ENCODE measurements at regions of chr3 and their contacts with region 1.

Region 1: GRCh38 chr3:44624749-44625480 is at the start of gene ZNF197:
- DNase-seq: peak; percentile 81
- ATAC-seq: peak; percentile 93
- H3K4me3 Mint-ChIP-seq: peak within 1 kb of the TSS; percentile 87
- H3K27ac Mint-ChIP-seq: peak within 1 kb of the TSS; percentile 76
- H3K4me1 Mint-ChIP-seq: peaks cover 24% of the 10 kb centered on the region
- H3K27me3 Mint-ChIP-seq: no peaks in the 10 kb centered on the region
- total RNA-seq, gene ZNF197: 10.9 to 11.6 TPM

Region 2: GRCh38 chr3:44529927-44530326 is 95.0 kb before region 1 on chr3:
- CTCF ChIA-PET with region 1: interaction called, 4 read pairs
- POLR2A ChIA-PET with region 1: no interaction called
- intact Hi-C with region 1: loop called in 1 of 2 experiments (anchors 1 kb)
- DNase-seq: peak; percentile 53
- ATAC-seq: no peak
- H3K4me3 Mint-ChIP-seq: no peak overlapping the region
- H3K27ac Mint-ChIP-seq: no peak overlapping the region
- H3K4me1 Mint-ChIP-seq: no peaks in the 10 kb centered on the region
- H3K27me3 Mint-ChIP-seq: peaks cover 7% of the 10 kb centered on the region

Region 3: GRCh38 chr3:44554626-44555592 is 70.0 kb before region 1 on chr3 and contains the start of gene ZKSCAN7:
- CTCF ChIA-PET with region 1: no interaction called
- POLR2A ChIA-PET with region 1: no interaction called
- intact Hi-C with region 1: loop called in 1 of 2 experiments (anchors 2 kb)
- DNase-seq: peak; percentile 68
- ATAC-seq: peak; percentile 65
- H3K4me3 Mint-ChIP-seq: peak within 1 kb of the TSS; percentile 88
- H3K27ac Mint-ChIP-seq: peak within 1 kb of the TSS; percentile 88
- H3K4me1 Mint-ChIP-seq: peaks cover 13% of the 10 kb centered on the region
- H3K27me3 Mint-ChIP-seq: no peaks in the 10 kb centered on the region
- total RNA-seq, gene ZKSCAN7: 2.0 TPM

Region 4: DNA sequence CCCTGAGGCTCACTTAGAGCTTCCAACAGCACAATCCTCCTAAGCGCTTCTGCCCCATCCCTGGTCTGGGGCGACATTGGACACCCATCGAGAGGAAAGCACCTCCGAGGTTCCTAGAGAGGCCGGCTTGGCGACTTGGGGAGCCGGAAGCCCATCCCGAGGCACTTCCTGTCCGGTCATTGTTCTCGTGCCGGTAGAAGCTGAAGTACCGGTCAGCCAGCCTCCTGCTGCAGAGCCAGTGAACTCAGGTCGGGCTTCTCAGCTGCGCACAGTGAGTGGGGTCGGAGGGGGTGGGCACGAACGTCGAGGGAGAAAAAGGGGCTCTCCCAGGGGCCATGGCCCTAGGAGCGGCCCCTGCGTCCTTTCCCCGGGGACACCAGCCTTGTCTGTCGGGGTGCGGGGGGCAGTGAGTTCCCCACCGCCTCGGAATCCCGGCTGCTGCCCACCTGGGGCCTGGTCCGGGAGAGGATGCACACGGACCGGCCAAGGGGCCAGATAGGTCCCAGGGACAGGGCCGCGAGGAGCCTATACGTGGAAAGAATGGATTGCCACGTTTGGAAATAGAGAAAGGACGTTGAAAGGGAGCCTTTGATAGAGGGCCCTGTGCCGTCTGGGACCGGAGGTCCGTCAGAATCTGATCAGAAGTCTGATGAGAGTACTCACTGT is 23.8 kb after region 1 on chr3 and contains the start of gene ZNF35:
- CTCF ChIA-PET with region 1: interaction called, 4 read pairs
- POLR2A ChIA-PET with region 1: no interaction called
- intact Hi-C with region 1: loop called (anchors 1 to 2 kb)
- DNase-seq: peak; percentile 67
- ATAC-seq: peak; percentile 85
- H3K4me3 Mint-ChIP-seq: peak within 1 kb of the TSS; percentile 76
- H3K27ac Mint-ChIP-seq: no peak within 1 kb of the TSS
- H3K4me1 Mint-ChIP-seq: peaks cover 8% of the 10 kb centered on the region
- H3K27me3 Mint-ChIP-seq: no peaks in the 10 kb centered on the region
- total RNA-seq, gene ZNF35: 2.0 to 2.7 TPM

Region 5: DNA sequence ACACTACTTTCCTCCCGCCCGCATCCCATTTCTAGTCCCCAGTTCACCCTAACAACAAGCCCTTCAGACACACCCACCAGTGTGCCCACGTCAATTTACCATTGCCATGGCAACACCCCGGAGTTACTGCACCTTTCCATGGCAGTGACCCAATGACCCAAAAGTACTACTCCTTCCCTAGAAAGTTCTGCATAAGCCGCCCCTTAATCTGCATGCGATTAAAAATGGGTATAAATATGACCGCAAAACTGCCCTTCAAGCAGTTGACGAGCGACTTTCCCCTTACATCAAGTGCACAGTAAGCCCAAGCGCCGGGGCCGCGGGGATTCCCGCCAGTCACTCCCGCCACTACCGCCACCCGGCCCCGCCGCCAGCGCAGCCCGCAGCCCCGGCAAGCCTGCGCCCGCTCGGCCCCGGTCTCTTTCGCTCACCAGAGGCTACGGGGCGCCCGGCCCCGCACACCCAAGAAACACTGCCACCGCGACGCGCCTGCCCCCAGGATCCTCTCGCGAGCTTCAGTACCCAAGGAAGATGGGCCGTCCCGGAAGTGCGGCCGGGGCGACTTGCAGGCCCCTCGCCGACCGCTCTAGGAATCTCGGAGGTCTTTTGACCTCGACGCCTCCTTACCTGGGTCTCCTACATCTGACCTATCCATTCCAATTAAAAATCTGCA is 60.3 kb after region 1 on chr3:
- CTCF ChIA-PET with region 1: no interaction called
- POLR2A ChIA-PET with region 1: no interaction called
- intact Hi-C with region 1: loop called (anchors 1 to 2 kb)
- DNase-seq: peak; percentile 77
- ATAC-seq: peak; percentile 92
- H3K4me3 Mint-ChIP-seq: peak overlapping the region; percentile 73
- H3K27ac Mint-ChIP-seq: peak overlapping the region; percentile 29
- H3K4me1 Mint-ChIP-seq: peaks cover 11% of the 10 kb centered on the region
- H3K27me3 Mint-ChIP-seq: peaks cover 23% of the 10 kb centered on the region

Region 6: DNA sequence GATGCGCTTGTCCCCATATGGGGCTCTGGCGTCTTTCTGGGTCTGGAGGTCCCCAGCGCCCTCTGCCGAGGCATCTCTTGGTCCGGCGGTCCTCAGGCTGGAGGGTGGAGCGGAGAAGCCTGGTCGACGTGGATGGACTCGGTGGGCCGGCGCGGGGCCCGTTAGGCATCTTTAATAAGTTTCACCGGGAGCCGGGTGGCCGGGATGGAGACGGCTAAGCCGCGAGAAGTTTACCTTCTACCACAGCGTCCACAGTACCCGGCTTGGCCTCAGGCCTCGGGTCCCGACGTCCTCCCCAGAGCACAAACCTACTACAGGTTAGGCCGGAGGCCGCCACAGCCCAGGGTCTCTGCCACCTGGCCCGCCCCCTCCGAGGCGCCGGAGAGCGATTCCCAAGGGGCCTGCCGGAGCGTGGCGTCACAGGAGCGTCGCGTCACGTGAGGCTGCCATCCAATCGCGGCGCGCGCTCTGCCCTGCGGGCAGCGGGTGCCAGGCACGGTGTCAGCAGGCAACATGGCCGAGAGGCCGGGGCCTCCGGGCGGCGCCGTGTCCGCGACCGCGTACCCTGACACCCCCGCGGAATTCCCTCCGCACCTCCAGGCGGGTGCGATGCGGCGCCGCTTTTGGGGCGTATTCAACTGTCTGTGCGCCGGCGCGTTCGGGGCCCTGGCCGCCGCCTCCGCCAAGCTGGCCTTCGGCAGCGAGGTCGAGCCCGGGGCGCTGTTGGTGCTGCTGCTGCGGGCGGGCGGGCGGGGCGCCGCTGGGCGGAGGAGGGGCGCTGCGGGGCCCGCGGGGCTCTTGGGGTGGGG is 236.7 kb after region 1 on chr3 and contains the start of gene TMEM42:
- CTCF ChIA-PET with region 1: no interaction called
- POLR2A ChIA-PET with region 1: no interaction called
- intact Hi-C with region 1: loop called in 1 of 2 experiments (anchors 5 kb)
- DNase-seq: peak; percentile 91
- ATAC-seq: peak; percentile 96
- H3K4me3 Mint-ChIP-seq: peak within 1 kb of the TSS; percentile 78
- H3K27ac Mint-ChIP-seq: peak within 1 kb of the TSS; percentile 73
- H3K4me1 Mint-ChIP-seq: peaks cover 34% of the 10 kb centered on the region
- H3K27me3 Mint-ChIP-seq: no peaks in the 10 kb centered on the region
- total RNA-seq, gene TMEM42: 7.6 to 10.9 TPM

Measured in activated CD4-positive, alpha-beta T cell treated with anti-CD3 and anti-CD28 coated beads for 36 hours (primary cell).